Aorta (tissue), 5 donors: ENCODE measurements at regions of chr1 and their contacts with region 1.

Region 1: DNA sequence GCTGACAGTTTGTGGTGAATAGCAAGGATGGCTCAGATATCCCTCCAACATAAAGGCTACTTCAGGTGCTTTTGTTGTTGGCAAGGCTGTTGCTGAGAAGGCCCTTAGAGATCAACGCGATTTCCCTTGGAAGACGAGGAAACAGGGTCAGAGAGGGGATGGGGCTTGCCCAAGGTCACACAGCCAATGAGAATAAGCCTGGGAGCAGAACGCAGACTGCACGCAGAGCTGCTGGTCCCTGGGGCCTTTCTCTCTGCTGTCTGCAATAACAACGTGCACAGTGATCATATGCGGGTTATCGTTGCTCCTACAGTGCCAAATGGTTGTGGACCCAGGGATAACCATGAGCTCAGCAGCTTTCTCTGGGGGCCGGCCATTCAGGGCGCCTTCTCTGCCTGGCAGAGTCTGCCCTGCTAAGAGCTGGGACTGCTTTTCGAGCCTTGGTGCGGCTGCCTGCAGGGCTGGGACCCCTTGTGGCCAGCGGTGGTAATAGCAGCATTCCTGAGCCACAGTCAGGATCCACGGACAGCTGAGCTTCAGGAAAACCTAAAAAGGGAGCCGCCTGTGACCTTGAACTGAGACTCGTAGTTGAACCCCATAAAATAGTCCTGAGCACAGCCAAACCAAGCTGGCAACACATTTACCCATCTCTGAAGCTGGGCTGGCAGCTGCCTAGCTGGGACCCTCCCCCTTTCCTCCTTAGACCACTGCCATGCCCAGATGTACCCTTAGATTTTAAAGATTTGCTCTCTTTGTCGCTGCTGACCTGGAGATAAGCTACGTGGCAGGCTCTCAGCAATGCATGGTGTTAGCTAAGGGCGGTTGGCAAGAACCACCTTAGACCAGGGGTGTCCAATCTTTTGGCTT is 39.8 kb downstream of the HTR6 start:
- DNase-seq: peak; percentile 81 to 91
- ATAC-seq: peak; percentile 88
- H3K4me3 ChIP-seq: no peak overlapping the region
- H3K27ac ChIP-seq: no peak overlapping the region
- H3K4me1 ChIP-seq: no peaks in the 10 kb centered on the region
- H3K27me3 ChIP-seq: no peaks in the 10 kb centered on the region

Region 2: GRCh38 chr1:19361611-19362147 is 342.8 kb before region 1 on chr1:
- intact Hi-C with region 1: no loop called
- DNase-seq: no peak
- ATAC-seq: peak; percentile 5
- H3K4me3 ChIP-seq: no peak overlapping the region
- H3K27ac ChIP-seq: no peak overlapping the region
- H3K4me1 ChIP-seq: no peaks in the 10 kb centered on the region
- H3K27me3 ChIP-seq: no peaks in the 10 kb centered on the region

Region 3: GRCh38 chr1:19535214-19535613 is 169.3 kb before region 1 on chr1:
- intact Hi-C with region 1: no loop called
- DNase-seq: no peak
- ATAC-seq: no peak
- H3K4me3 ChIP-seq: no peak overlapping the region
- H3K27ac ChIP-seq: no peak overlapping the region
- H3K4me1 ChIP-seq: no peaks in the 10 kb centered on the region
- H3K27me3 ChIP-seq: no peaks in the 10 kb centered on the region

Region 4: DNA sequence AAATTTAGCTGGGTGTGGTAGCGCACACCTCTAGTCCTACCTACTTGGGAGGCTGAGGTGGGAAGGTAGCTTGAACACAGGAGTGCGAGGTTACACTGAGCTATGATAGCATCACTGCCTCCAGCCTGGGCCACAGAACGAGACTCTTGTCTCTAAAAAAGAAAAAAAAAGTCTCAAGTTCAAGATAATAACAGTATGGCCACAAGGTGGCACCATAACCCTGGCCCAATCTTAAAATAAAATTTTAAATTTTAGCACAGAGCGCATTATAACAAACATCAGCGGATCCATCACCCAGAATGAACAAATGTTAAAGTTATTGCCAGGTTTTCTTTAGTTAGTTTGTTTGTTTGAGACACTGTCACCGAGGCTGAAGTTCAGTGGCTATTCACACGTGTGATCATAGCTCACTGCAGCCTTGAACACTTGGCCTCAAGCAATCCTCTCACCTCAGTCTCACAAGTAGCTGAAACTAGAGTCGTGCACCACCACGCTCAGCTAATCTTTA is 42.7 kb before region 1 on chr1:
- intact Hi-C with region 1: loop called (anchors 5 kb)
- DNase-seq: no peak
- ATAC-seq: no peak
- H3K4me3 ChIP-seq: no peak overlapping the region
- H3K27ac ChIP-seq: no peak overlapping the region
- H3K4me1 ChIP-seq: no peaks in the 10 kb centered on the region
- H3K27me3 ChIP-seq: no peaks in the 10 kb centered on the region

Region 5: GRCh38 chr1:19967808-19968207 is 263.3 kb after region 1 on chr1:
- intact Hi-C with region 1: no loop called
- DNase-seq: peak in 1 of 2 donors; percentile 56
- ATAC-seq: peak; percentile 26
- H3K4me3 ChIP-seq: no peak overlapping the region
- H3K27ac ChIP-seq: no peak overlapping the region
- H3K4me1 ChIP-seq: no peaks in the 10 kb centered on the region
- H3K27me3 ChIP-seq: no peaks in the 10 kb centered on the region